ENCODE measurements at regions of chr3 and their contacts with region 1.

Region 1: DNA sequence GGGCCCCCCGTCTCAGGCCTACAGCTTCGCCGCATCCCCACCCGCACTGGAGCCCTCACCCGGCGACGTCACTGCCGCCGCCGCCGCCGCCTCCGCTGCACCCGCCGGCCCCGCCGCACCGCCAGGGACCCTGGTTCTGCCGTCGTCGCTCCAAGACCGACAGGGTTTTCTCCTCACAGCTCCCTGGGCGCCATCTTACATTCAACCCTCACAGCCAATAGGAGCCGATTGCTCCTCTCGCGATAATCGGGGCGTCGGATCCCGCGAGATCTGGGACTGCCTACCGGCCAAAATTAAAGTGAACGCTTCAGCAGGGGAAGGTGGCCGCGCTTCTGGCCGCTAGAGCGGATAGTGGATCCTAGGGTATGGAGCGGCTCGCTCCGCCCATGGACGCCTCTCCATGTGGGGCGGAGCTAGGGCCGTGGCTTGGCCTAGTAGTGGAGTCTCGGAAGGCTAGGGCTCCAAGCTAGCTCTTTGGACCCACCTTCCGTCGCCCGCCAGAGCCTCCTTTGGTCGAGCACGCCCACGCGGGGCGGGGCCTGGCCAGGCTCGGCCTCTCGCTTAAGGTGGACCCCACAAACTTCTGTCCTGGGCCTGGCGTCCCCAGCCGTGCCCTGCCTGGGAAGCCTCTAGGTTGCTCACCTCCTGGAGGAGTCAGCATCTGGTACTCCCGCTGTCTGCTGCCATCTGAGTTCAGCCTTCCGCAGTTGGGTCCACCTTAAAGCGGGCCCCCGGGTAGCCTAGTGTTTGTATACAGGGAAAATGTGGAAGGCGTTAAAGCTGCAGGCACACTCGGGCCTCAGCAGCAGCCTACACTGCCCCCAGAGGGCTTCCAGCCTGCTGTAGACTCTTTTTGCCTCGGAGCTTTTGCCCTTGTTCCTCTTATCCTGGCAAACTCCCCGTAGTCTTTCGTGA is at the start of gene QRICH1:
- DNase-seq: peak; percentile 98
- ATAC-seq: peak; percentile 86
- H3K4me3 Mint-ChIP-seq: peak within 1 kb of the TSS; percentile 93
- H3K27ac Mint-ChIP-seq: peak within 1 kb of the TSS; percentile 99
- H3K4me1 Mint-ChIP-seq: peaks cover 27% of the 10 kb centered on the region
- H3K27me3 Mint-ChIP-seq: no peaks in the 10 kb centered on the region
- total RNA-seq, gene QRICH1: 130 to 131 TPM

Region 2: DNA sequence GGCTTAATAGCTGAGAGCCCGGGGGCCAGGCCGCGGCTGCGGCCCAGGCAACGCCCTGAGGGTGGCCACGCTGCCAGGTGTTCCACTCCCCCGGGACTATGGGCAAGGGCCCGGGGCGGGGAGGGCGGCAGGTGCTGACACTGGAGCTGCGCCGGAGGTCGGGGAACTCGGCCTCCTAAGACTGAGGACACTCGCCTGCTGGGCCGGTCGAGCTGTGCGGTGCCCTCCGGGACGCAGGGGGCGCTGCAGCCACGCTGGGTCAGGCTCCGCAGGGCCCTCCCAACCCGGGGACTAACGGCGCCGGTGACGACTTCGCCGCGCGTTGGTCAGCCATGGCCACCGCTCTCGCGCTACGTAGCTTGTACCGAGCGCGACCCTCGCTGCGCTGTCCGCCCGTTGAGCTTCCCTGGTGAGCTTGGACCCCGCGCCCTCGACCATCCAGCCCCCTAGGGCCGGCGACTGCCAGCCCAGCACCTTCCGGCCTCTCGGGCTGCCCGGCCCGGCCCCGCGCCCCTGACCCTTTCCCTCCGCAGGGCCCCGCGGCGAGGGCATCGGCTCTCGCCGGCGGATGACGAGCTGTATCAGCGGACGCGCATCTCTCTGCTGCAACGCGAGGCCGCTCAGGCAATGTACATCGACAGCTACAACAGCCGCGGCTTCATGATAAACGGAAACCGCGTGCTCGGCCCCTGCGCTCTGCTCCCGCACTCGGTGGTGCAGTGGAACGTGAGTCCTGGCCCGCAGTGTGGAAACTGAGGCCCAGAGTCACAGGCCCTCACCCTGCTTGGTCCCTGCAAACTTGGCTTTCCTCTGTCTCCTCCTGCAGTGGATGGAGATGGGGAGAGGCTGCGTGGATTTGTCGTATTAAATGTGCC is 72.1 kb before region 1 on chr3 and contains the start of gene NDUFAF3:
- CTCF ChIA-PET with region 1: interaction called, 24 read pairs
- POLR2A ChIA-PET with region 1: interaction called, 62 read pairs
- DNase-seq: peak; percentile 94
- ATAC-seq: peak; percentile 74
- H3K4me3 Mint-ChIP-seq: peak within 1 kb of the TSS; percentile 97
- H3K27ac Mint-ChIP-seq: peak within 1 kb of the TSS; percentile 99
- H3K4me1 Mint-ChIP-seq: peaks cover 61% of the 10 kb centered on the region
- H3K27me3 Mint-ChIP-seq: no peaks in the 10 kb centered on the region
- total RNA-seq, gene NDUFAF3: 92.1 to 93.7 TPM

Region 3: DNA sequence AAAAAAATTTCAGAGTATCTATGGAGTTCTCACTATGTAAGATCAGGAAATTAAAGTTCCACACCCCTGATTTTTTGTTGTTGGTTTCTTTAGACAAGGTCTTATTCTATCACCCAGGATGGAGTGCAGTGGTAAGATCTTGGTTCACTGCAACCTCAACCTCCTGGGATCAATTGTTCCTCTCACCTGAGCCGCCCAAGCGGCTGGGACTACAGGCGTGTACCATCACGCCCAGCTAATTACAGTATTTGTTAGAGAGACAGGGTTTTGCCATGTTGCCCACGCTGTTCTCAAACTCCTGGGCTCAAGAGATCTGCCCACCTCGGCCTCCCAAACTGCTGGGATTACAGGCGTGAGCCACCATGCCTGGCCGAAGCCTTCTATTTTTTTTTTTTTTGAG is 12.7 kb before region 1 on chr3:
- CTCF ChIA-PET with region 1: interaction called, 3 read pairs
- POLR2A ChIA-PET with region 1: interaction called, 14 read pairs
- DNase-seq: no peak
- ATAC-seq: no peak
- H3K4me3 Mint-ChIP-seq: no peak overlapping the region
- H3K27ac Mint-ChIP-seq: no peak overlapping the region
- H3K4me1 Mint-ChIP-seq: no peaks in the 10 kb centered on the region
- H3K27me3 Mint-ChIP-seq: no peaks in the 10 kb centered on the region

Region 4: DNA sequence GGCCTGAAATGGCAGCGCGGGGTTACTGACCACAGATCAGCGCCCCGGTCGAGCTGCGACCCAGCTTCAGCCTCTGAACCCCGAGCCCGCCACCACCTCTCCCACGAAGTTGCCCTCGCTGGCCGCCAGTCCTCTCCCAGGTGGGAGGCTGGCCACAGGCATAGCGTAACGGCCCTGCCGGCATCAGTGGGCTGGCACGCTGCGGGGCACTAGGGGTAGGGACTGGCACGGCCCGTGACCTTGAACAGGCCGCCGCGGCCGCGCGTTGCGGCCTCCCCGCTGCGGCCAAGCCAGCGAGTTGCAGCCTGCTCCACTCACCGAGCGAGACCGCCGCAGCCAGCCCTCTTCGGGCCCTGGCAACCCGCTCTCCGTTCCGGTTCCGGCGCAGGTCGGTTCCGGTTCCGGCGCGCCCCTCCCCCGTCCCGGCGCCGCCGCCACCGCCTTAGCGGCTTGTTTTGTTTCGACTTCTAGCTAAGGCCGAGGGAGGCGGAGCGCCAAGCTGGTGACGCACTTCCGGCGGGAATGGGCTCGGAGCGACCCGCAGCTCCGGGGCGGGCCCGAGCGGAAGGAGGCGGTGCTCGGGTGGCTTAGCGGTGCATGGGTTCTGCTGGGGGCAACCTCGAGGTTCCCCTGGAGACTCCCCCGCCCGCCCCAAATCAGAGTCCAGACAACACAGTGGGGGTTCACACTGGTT is 26.5 kb after region 1 on chr3 and contains the start of gene USP19:
- CTCF ChIA-PET with region 1: interaction called, 11 read pairs
- POLR2A ChIA-PET with region 1: interaction called, 65 read pairs
- DNase-seq: peak; percentile 95
- ATAC-seq: peak; percentile 91
- H3K4me3 Mint-ChIP-seq: peak within 1 kb of the TSS; percentile 89
- H3K27ac Mint-ChIP-seq: peak within 1 kb of the TSS; percentile 95
- H3K4me1 Mint-ChIP-seq: peaks cover 24% of the 10 kb centered on the region
- H3K27me3 Mint-ChIP-seq: no peaks in the 10 kb centered on the region
- total RNA-seq, gene USP19: 58.0 to 60.4 TPM

Region 5: DNA sequence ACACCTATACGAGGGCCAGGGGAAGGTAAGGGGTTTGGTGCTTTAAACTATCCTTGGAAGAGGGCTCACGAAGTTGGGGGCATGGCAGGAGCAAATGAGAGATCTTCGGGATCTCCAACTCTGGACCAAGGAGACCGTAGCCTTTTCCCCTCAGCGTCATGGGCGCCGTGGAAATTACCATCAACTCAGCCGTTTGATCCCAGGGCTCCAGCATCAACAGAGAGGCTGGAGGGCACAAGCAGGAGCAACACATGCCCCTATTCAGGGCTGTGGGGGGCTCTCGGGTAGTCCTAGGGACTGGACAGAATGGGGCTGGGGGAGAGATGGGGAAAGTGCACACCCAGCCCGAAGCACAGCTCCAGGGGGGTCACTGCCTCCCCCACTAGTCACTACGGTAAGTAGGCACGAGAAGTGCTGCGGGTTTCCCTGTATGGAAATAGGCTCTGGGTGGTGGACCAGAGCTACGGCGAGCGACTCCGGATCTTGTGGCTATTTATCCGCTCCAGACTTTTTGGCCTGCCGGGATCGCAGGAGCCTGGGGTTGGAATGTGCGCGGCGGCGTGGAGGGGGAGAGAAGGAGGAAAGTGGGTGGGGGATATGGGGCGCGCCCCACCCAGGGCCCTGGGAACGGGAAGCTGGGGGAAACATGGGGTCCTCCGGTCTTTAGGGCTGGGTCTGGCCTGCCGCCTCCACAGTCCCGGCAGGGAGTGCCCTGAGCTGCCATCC is 39.3 kb after region 1 on chr3:
- CTCF ChIA-PET with region 1: no interaction called
- POLR2A ChIA-PET with region 1: no interaction called
- DNase-seq: no peak
- ATAC-seq: no peak
- H3K4me3 Mint-ChIP-seq: no peak overlapping the region
- H3K27ac Mint-ChIP-seq: no peak overlapping the region
- H3K4me1 Mint-ChIP-seq: peaks cover 13% of the 10 kb centered on the region
- H3K27me3 Mint-ChIP-seq: peaks cover 14% of the 10 kb centered on the region

Region 6: GRCh38 chr3:49411968-49412631 is 318.0 kb after region 1 on chr3 and contains the starts of genes RHOA and TCTA:
- CTCF ChIA-PET with region 1: no interaction called
- POLR2A ChIA-PET with region 1: interaction called, 19 read pairs
- DNase-seq: peak; percentile 99
- ATAC-seq: peak; percentile 87
- H3K4me3 Mint-ChIP-seq: peak within 1 kb of the TSS; percentile 86
- H3K27ac Mint-ChIP-seq: peak within 1 kb of the TSS; percentile 95
- H3K4me1 Mint-ChIP-seq: peaks cover 64% of the 10 kb centered on the region
- H3K27me3 Mint-ChIP-seq: peaks cover 1% of the 10 kb centered on the region
- total RNA-seq, gene RHOA: 518 to 520 TPM
- total RNA-seq, gene TCTA: 19.6 to 25.2 TPM